Mammary epithelial cell (primary cell): ENCODE measurements at regions of chr13 and their contacts with region 1.

Region 1: GRCh38 chr13:99087096-99087953 is 109.5 kb upstream of the DOCK9 start:
- DNase-seq: peak; percentile 88
- H3K4me3 ChIP-seq: peak overlapping the region; percentile 76 to 85 (median 84)
- H3K27ac ChIP-seq: peak overlapping the region; percentile 81
- H3K4me1 ChIP-seq: peaks cover 21% of the 10 kb centered on the region
- H3K27me3 ChIP-seq: no peaks in the 10 kb centered on the region
- CTCF ChIP-seq: peak in 1 of 2 donors; percentile 34

Region 2: GRCh38 chr13:98977568-98978265 is 109.6 kb before region 1 on chr13 and contains the start of gene DOCK9:
- CTCF ChIA-PET with region 1: no interaction called
- dilution Hi-C with region 1: no loop called
- in situ Hi-C with region 1: no loop called
- intact Hi-C with region 1: loop called (anchors 5 kb)
- DNase-seq: peak; percentile 76
- H3K4me3 ChIP-seq: peak within 1 kb of the TSS; percentile 38 to 50 (median 41)
- H3K27ac ChIP-seq: peak within 1 kb of the TSS; percentile 92
- H3K4me1 ChIP-seq: peaks cover 50% of the 10 kb centered on the region
- H3K27me3 ChIP-seq: no peaks in the 10 kb centered on the region
- CTCF ChIP-seq: no peak
- total RNA-seq, gene DOCK9: 65.2 to 77.6 TPM

Region 3: GRCh38 chr13:99004978-99005377 is 82.3 kb before region 1 on chr13:
- CTCF ChIA-PET with region 1: no interaction called
- dilution Hi-C with region 1: no loop called
- in situ Hi-C with region 1: no loop called
- intact Hi-C with region 1: no loop called
- DNase-seq: no peak
- H3K4me3 ChIP-seq: no peak overlapping the region
- H3K27ac ChIP-seq: no peak overlapping the region
- H3K4me1 ChIP-seq: peaks cover 2% of the 10 kb centered on the region
- H3K27me3 ChIP-seq: no peaks in the 10 kb centered on the region
- CTCF ChIP-seq: no peak

Region 4: DNA sequence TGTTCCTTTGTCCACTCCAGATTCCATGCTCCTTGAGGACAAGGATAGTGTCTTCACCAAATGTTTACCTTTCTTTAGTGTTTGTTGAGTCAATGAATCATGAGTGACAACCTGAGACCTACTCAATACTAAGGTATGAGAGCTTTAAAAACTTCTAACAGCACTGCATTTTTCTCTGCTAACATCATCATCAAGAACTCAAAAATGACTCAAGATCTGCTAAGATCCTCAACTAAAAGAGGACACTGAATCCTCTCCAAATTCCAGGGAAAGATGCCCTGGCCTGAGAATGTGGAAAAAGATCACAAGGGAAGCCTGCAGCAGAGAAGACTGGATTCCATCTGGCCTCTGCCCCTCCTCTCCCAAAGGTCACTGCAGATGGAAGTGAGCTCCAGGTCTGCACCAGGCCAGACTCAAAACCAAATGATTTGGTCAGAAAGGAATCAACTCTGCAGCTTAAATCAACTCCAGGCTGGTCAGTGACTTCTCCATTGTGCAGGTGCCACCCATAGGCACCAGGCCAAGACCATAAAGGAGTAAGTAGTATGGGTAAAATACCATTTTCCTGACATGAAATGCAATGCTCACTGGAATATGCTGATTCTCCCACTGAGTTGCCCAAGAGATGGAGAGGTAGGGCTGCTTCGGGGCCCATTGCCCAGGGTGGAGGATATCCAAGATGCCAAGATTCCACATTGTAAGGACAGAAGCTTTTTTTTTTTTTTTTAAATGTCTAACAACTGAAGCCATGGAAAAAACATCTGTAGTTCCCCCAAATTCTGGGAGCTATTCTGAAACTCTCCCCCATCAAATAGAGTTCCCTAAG is 20.0 kb before region 1 on chr13:
- CTCF ChIA-PET with region 1: interaction called, 3 read pairs
- dilution Hi-C with region 1: no loop called
- in situ Hi-C with region 1: no loop called
- intact Hi-C with region 1: loop called (anchors 2 kb)
- DNase-seq: peak; percentile 82
- H3K4me3 ChIP-seq: no peak overlapping the region
- H3K27ac ChIP-seq: no peak overlapping the region
- H3K4me1 ChIP-seq: peaks cover 34% of the 10 kb centered on the region
- H3K27me3 ChIP-seq: no peaks in the 10 kb centered on the region
- CTCF ChIP-seq: no peak

Region 5: DNA sequence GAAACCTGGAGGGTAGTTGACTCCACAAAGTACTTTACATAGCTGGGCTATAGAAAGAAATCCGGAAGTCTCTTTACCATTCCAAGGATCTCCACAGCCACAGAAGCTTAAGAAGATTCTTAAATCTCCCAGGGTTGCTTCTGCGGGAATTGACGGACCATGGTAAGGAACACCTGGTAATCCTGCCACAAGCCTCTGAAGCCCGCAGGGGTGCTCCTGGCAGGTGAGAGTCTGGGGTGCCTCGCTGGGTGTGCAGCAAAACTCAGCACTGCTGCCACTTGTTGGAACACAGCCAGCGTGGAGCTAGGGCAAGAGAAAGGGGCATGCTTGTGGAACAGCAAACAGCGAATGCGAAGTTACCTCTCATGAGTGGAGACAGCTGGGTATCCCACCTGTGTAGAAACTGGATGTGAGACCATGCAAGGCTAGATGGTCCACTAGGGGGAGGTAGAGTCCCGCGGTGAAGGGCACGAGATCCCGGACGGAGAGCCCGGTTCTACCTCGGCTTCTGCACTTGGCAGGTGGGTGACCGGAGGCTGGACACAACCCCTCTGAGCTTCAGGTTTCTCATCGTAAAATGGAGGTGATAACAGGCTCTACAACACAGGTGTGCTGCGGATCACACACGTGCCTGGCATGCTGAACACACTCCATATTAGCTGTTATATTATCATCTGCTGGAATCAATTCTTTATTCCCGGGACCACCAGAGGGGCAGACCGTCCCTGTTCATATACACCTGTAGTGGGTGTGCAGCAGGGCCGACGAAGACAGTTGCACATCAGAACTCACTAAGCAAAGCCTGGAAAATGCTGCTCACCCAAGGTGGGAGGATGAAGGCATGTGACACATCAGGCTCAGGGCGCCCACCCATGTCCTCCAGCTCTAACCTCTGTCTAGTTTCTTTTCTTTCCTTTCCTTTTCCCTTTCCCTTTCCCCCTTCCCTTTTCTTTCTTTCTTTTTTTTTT is 89.3 kb after region 1 on chr13:
- CTCF ChIA-PET with region 1: no interaction called
- dilution Hi-C with region 1: no loop called
- in situ Hi-C with region 1: no loop called
- intact Hi-C with region 1: loop called (anchors 1 kb)
- DNase-seq: peak; percentile 44
- H3K4me3 ChIP-seq: no peak overlapping the region
- H3K27ac ChIP-seq: no peak overlapping the region
- H3K4me1 ChIP-seq: no peaks in the 10 kb centered on the region
- H3K27me3 ChIP-seq: no peaks in the 10 kb centered on the region
- CTCF ChIP-seq: peak; percentile 93 to 97

Region 6: GRCh38 chr13:99228737-99229691 is 141.7 kb after region 1 on chr13:
- CTCF ChIA-PET with region 1: no interaction called
- dilution Hi-C with region 1: no loop called
- in situ Hi-C with region 1: no loop called
- intact Hi-C with region 1: no loop called
- DNase-seq: peak; percentile 90
- H3K4me3 ChIP-seq: peak overlapping the region in 1 of 3 experiments; percentile 17
- H3K27ac ChIP-seq: no peak overlapping the region
- H3K4me1 ChIP-seq: peaks cover 40% of the 10 kb centered on the region
- H3K27me3 ChIP-seq: no peaks in the 10 kb centered on the region
- CTCF ChIP-seq: no peak

Region 7: GRCh38 chr13:99264051-99264450 is 176.7 kb after region 1 on chr13:
- CTCF ChIA-PET with region 1: no interaction called
- dilution Hi-C with region 1: loop called (anchors 10 kb)
- in situ Hi-C with region 1: no loop called
- intact Hi-C with region 1: loop called (anchors 2 kb)
- DNase-seq: no peak
- H3K4me3 ChIP-seq: no peak overlapping the region
- H3K27ac ChIP-seq: no peak overlapping the region
- H3K4me1 ChIP-seq: no peaks in the 10 kb centered on the region
- H3K27me3 ChIP-seq: no peaks in the 10 kb centered on the region
- CTCF ChIP-seq: no peak